ENCODE measurements at regions of chr9 and their contacts with region 1.

Region 1: GRCh38 chr9:113509463-113509862 is 45.9 kb downstream of the RGS3 start:
- DNase-seq: no peak
- ATAC-seq: no peak

Region 2: DNA sequence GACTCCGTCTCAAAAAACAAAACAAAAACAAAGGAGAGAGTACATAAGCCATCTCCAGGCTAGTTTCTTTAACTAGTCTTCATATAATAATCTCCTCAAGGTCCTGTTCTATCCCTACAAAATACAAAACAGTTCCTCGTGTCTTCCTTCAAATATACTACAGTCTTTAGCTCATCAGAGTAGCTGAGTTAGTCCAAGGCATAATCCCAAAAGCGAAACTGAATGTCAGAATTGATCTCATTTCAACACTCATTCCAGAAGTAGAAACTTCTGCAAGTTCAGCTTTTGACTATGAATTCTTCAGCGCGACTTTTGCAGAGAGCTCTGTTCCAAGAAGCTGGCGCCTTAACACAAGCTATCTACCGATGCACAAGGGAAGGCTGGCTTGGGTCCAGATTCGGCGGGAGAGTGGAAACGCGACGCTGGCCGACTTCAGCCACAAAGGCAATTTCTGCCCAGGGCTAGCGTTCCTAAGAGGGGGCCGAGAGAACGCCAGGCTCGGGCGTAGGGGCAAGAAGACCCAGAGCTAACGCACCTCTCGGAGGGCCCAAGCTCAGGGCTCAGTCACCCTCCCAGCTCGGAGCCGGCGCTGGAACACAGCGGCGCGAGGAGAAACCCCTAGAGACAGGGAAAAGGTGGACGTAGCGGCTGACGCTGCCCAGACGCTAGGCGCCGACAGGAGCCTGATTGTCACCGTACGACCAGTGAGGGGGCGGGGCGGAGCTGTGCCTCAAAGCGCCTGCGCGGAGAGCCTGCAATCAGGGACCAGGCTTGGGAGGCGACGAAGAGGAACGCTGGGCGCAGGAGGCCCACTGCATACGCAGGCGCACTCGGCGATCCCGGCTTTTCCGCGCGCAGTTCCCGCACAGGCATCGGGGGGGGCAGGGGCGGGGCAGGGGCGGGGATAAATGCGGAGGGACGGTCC is 1130.0 kb before region 1 on chr9:
- intact Hi-C with region 1: no loop called
- DNase-seq: peak; percentile 100
- ATAC-seq: peak; percentile 97

Region 3: GRCh38 chr9:113492343-113493212 is 16.9 kb before region 1 on chr9:
- intact Hi-C with region 1: loop called (anchors 1 kb)
- DNase-seq: no peak
- ATAC-seq: peak; percentile 73

Region 4: GRCh38 chr9:113687680-113688371 is 178.4 kb after region 1 on chr9:
- intact Hi-C with region 1: no loop called
- DNase-seq: no peak
- ATAC-seq: no peak